HAP-1 (cell line): ENCODE measurements at regions of chr17 and their contacts with region 1.

Region 1: DNA sequence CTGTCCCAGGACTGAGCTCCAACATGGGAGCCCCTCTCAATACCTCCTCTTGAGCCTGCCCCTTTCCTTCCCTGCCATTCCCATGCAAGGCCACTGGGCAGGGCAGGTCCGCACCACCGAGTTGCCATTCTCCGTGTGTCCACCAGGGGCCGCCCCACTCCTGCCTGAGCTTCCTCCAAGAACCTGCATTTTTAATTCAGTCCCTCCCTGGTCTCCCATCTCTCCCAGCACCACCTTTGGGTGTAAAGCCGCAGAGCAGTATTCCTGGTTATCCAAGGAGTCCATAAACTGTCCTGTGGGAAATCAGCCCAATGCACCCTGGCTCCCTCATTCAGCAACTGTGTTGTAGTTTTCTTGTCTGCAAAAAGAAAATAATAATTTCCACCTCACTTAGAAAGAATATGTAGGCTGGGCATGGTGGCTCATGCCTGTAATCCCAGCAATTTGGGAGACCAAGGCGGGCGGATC is 15.9 kb upstream of the ANKRD40CL start:
- DNase-seq: peak; percentile 90 to 93
- H3K4me3 ChIP-seq: no peak overlapping the region
- H3K4me1 ChIP-seq: no peaks in the 10 kb centered on the region
- H3K27me3 ChIP-seq: no peaks in the 10 kb centered on the region

Region 2: DNA sequence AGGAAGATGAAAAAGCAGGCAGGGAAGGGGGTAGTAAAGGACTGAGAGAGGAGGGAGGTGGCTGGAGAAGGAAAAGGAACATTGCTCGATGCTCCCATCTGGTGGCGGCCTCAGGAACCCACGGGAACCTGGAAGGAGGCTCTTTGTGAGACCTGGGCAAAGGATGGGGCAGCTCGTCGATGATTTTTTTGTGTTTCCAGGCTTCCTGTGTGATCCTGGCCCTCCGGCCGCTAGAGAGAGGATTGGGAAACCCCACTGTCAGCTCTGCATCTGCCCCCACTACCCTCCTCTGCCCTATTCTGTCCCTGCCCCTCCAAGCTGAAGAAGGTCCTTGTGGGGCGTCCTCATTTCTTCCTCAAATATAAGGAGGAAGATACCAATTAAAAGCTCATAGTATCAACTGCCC is 58.7 kb after region 1 on chr17:
- in situ Hi-C with region 1: loop called (anchors 5 kb)
- DNase-seq: peak; percentile 73 to 83
- H3K4me3 ChIP-seq: no peak overlapping the region
- H3K4me1 ChIP-seq: no peaks in the 10 kb centered on the region
- H3K27me3 ChIP-seq: no peaks in the 10 kb centered on the region

Region 3: DNA sequence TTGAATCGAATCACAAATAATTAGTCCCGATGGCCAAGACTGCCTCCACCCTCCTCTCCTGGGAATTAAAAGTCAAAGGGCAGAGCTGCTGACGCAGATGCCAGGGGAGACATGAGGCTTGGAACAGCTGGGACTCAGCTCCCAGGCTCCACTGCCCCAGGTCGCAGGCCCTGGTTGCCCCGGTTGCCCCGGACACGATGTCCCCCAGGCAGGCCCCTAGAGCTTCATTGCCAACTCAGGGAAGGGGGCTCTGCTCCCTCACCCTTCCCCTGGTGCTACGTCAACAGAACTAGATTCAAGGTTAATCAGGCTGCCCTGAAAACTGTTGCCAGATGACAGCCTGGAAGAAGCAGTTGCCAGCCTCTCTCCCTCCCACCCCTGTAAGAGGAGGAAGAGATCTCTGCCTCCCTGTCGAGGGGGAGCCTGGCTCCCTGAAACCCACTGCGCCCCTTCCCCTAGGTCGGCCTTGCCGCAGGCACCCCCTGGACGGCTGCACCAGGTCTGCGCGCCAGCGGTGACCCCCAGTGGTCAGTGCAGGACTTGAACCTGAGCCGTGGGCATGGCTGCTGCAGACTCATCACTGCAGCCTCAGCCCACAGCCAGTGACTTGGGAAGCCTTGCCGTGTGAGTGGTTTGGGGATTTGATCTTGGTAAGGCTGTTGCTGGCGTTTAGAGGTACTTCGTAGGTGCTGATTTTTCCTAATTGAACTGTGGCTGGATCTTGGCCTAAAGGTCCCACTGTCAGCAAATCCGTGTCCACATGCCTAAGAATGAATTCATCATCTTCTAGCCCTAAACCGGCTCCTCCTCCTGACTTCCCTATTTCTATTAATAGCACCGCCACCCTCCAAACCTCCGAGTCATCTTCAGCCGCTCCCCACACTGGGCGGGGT is 167.0 kb after region 1 on chr17:
- in situ Hi-C with region 1: loop called (anchors 5 kb)
- DNase-seq: peak in 1 of 2 experiments; percentile 74
- H3K4me3 ChIP-seq: no peak overlapping the region
- H3K4me1 ChIP-seq: peaks cover 3% of the 10 kb centered on the region; the same call in 1 of the 2 replicates
- H3K27me3 ChIP-seq: no peaks in the 10 kb centered on the region